Colonic mucosa (tissue), 4 donors: ENCODE measurements at regions of chr19 and their contacts with region 1.

Region 1: DNA sequence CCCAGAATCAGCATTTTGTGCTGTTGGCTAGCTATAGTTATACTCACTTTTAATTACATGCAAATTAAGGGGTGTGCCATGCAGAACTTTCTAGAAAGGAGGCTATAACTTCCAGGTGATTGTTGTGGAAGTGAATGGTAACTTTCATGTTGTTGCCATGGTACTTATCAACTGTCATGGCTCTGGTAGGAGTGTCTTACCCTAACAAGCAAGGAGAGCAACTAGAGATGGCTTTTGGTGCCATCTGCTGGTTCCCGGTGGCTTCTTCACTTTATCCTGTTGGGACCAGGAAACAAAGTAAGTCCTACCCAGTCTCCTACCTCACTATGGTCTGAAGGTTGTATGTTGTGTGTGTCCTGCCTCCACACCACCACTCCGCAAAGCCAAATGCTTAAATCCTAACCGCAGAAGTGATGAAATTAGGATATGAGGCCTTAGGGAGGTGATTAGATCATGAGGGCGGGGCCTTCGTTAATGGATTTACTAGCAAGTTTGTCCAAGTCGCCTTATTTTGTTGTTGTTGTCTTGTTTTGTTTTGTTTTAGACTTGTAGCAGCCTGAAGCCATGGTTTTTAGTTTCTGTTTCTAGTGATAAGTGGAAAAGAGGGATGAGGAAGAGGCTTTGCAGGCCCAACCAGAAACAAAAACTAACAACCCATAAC is 22.6 kb downstream of the FBXL12 start:
- DNase-seq: peak; percentile 92
- H3K4me3 ChIP-seq: no peak overlapping the region
- H3K27ac ChIP-seq: peak overlapping the region; percentile 23
- H3K4me1 ChIP-seq: no peaks in the 10 kb centered on the region
- H3K27me3 ChIP-seq: no peaks in the 10 kb centered on the region
- CTCF ChIP-seq: peak; percentile 70

Region 2: DNA sequence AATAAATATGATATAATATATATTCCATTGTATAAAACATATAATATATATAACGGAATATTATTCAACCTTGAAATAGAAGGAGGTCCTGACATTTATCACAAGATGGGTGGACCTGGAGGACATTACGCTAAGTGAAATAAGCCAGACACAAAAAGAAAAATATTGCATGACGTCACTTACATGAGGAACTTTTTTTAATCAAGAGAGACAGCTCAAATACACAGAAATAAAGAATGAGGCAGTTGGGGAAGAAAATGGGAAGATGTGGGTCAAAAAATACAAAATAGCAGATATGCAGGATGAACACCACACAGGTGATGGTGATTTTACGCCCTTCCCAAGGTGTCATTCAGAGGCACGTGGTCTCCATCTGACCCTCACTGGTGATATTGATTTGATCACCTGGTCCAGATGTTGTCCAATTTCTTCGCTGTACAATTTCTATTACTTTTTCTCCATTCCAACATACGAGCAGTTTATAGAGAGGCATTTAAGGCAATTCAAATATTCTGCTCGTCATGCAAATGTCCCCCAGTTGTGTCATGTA is 656.6 kb before region 1 on chr19:
- intact Hi-C with region 1: loop called (anchors 10 kb)
- DNase-seq: no peak
- H3K4me3 ChIP-seq: peak overlapping the region; percentile 86
- H3K27ac ChIP-seq: no peak overlapping the region
- H3K4me1 ChIP-seq: peaks cover 6% of the 10 kb centered on the region
- H3K27me3 ChIP-seq: no peaks in the 10 kb centered on the region
- CTCF ChIP-seq: no peak

Region 3: GRCh38 chr19:9205501-9206113 is 590.6 kb before region 1 on chr19:
- intact Hi-C with region 1: loop called (anchors 5 kb)
- DNase-seq: peak; percentile 52
- H3K4me3 ChIP-seq: no peak overlapping the region
- H3K27ac ChIP-seq: no peak overlapping the region
- H3K4me1 ChIP-seq: no peaks in the 10 kb centered on the region
- H3K27me3 ChIP-seq: no peaks in the 10 kb centered on the region
- CTCF ChIP-seq: peak; percentile 84

Region 4: GRCh38 chr19:9621156-9622037 is 174.8 kb before region 1 on chr19 and contains the start of gene ZNF561:
- intact Hi-C with region 1: loop called (anchors 2 kb)
- DNase-seq: peak; percentile 86
- H3K4me3 ChIP-seq: peak within 1 kb of the TSS; percentile 56
- H3K27ac ChIP-seq: peak within 1 kb of the TSS; percentile 81
- H3K4me1 ChIP-seq: peaks cover 4% of the 10 kb centered on the region
- H3K27me3 ChIP-seq: no peaks in the 10 kb centered on the region
- CTCF ChIP-seq: no peak
- total RNA-seq, gene ZNF561: 29.7 to 32.2 TPM